ENCODE measurements at regions of chrX and their contacts with region 1.

Region 1: GRCh38 chrX:43456063-43456462 is 200.0 kb upstream of the MAOA start:
- DNase-seq: peak; percentile 4
- H3K4me3 ChIP-seq: no peak overlapping the region
- H3K27ac ChIP-seq: peak overlapping the region; percentile 62
- H3K4me1 ChIP-seq: peaks cover 21% of the 10 kb centered on the region
- H3K27me3 ChIP-seq: no peaks in the 10 kb centered on the region
- CTCF ChIP-seq: no peak

Region 2: DNA sequence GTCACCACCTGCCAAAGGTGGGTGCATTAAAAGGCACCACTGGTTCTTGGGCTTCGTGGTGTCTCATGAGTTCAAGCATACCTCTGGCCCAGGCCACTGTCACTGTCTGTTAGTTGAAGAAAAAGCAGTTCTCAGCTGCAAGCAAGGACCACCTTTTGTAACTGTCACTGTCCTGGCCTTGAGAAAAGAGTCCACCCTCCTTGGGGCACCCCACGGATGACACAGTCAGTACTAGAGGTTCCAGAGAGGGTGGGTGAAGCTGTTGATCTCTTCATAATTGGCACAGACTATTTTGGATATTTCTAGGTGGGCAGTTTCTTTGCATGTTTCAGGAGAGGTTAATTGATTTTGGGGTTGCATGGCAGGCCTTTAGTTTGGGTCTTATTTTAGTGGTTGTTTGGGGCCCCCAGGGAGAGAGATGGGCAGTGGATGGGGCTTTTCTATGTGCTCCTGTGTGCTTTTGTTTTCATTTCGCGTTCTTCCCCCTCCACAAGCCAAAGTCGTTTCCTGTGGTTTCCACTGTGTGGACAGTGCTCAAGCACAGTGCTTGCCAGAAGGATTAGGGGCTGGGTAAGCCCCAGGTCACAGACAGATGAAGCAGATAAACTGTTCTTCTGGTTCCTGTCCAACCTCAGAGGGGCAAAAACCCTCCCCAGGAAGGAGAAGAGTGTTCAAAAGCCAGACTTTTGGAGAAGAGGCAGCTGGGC is 521.9 kb before region 1 on chrX:
- CTCF ChIA-PET with region 1: no interaction called
- POLR2A ChIA-PET with region 1: no interaction called
- intact Hi-C with region 1: no loop called
- DNase-seq: no peak
- H3K4me3 ChIP-seq: no peak overlapping the region
- H3K27ac ChIP-seq: no peak overlapping the region
- H3K4me1 ChIP-seq: no peaks in the 10 kb centered on the region
- H3K27me3 ChIP-seq: no peaks in the 10 kb centered on the region
- CTCF ChIP-seq: no peak

Region 3: DNA sequence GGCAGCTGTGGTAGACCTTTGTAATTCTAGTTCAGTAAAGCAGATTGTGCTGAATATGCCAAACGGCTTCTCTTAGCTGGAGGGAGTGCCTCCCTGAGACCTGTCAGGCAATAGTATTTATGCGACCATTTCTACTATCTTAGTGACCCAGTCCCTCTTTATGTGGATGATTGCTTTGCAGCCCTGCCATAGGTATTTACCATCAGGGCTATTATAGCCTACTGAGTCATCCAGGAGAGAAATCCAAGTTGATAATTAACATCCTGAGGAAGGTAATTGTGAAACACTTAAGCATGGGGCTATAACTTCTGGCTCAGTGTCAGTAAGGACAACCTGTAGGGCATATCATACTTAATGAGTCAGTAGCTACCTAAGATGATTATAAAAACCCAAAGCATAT is 96.1 kb after region 1 on chrX:
- CTCF ChIA-PET with region 1: no interaction called
- POLR2A ChIA-PET with region 1: no interaction called
- intact Hi-C with region 1: loop called (anchors 2 kb)
- DNase-seq: no peak
- H3K4me3 ChIP-seq: peak overlapping the region; percentile 19
- H3K27ac ChIP-seq: peak overlapping the region; percentile 71
- H3K4me1 ChIP-seq: peaks cover 22% of the 10 kb centered on the region
- H3K27me3 ChIP-seq: no peaks in the 10 kb centered on the region
- CTCF ChIP-seq: no peak

Region 4: DNA sequence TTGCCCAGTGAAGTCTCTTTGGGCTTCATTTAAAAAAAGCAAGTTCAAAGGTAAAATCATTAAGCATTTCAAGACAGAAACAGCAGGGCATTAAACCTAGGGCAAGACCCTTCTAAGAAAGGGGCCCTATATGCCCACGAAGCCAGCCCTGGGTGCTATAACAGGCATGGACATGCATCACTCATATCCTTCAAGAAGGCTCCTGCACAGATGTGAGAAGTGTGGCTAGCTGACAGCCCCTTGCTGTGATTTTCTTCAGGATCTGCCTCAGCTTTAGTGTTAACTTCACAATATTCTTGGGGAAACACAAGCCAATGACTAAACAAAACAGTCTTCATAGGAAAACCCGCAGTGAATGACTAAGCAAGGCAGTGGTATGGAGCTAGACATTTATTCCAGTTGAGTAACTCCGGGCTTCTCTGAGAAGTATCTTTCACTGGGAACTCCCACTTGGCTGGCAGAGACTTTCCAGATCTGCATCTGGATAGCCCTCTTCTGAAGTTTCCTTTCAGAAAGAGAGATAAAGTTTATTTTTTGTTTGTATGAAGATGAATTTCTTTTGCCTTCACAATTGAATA is 188.2 kb after region 1 on chrX:
- CTCF ChIA-PET with region 1: no interaction called
- POLR2A ChIA-PET with region 1: no interaction called
- intact Hi-C with region 1: no loop called
- DNase-seq: peak; percentile 34
- H3K4me3 ChIP-seq: no peak overlapping the region
- H3K27ac ChIP-seq: no peak overlapping the region
- H3K4me1 ChIP-seq: no peaks in the 10 kb centered on the region
- H3K27me3 ChIP-seq: no peaks in the 10 kb centered on the region
- CTCF ChIP-seq: no peak

Region 5: DNA sequence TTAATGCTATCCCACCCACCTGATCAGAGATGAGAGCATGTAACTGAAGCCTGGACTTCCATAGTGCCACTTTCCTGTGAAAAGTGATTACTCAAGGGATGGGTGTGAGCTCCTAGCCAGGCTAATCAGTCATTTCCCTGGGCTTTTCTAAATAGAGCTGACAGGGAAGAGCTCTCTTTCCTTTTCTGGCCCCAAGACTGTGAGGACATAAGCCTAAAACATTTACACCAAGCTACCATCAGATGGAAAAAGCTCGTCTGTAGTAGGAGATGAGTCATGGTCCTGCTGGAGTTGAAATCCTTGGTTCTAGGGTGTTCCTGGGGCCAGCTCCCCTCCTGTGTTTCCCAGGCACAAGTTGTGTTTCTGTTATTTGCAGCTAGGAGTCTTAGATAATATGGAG is 569.5 kb after region 1 on chrX:
- CTCF ChIA-PET with region 1: no interaction called
- POLR2A ChIA-PET with region 1: no interaction called
- intact Hi-C with region 1: no loop called
- DNase-seq: peak; percentile 5
- H3K4me3 ChIP-seq: no peak overlapping the region
- H3K27ac ChIP-seq: no peak overlapping the region
- H3K4me1 ChIP-seq: no peaks in the 10 kb centered on the region
- H3K27me3 ChIP-seq: no peaks in the 10 kb centered on the region
- CTCF ChIP-seq: no peak

Measured in A673 (cell line).